ENCODE measurements at regions of chr3 and their contacts with region 1.

Region 1: GRCh38 chr3:21894459-21895340 is 143.7 kb upstream of the ZNF385D start:
- DNase-seq: no peak
- ATAC-seq: peak; percentile 64

Region 2: GRCh38 chr3:20999661-21000060 is 895.0 kb before region 1 on chr3:
- intact Hi-C with region 1: no loop called
- DNase-seq: no peak
- ATAC-seq: no peak

Region 3: GRCh38 chr3:21484057-21484827 is 410.5 kb before region 1 on chr3:
- intact Hi-C with region 1: loop called (anchors 10 kb)
- DNase-seq: no peak
- ATAC-seq: peak; percentile 44

Measured in Right ventricle myocardium inferior (tissue), 1 donor.